Activated T-helper 2 cell treated with anti-CD3 and anti-CD28 coated beads, Interferon-gamma antibody, Interleukin-2, Interleukin-4, amounts not matched to agents 10 μg/mL and 5 μg/mL and 100 μg/mL, durations not matched to agents 14 hours and 24 hours and 36 hours (primary cell): ENCODE measurements at regions of chr5 and their contacts with region 1.

Region 1: GRCh38 chr5:54646356-54647101 is 129.0 kb downstream of the SNX18 start:
- DNase-seq: peak; percentile 74
- H3K4me3 Mint-ChIP-seq: peak overlapping the region; percentile 46
- H3K27ac Mint-ChIP-seq: peak overlapping the region; percentile 86
- H3K4me1 Mint-ChIP-seq: peaks cover 50% of the 10 kb centered on the region
- H3K27me3 Mint-ChIP-seq: no peaks in the 10 kb centered on the region

Region 2: GRCh38 chr5:54610197-54610944 is 36.2 kb before region 1 on chr5:
- intact Hi-C with region 1: loop called (anchors 2 kb)
- DNase-seq: peak; percentile 46
- H3K4me3 Mint-ChIP-seq: peak overlapping the region; percentile 38
- H3K27ac Mint-ChIP-seq: peak overlapping the region; percentile 58
- H3K4me1 Mint-ChIP-seq: peaks cover 29% of the 10 kb centered on the region
- H3K27me3 Mint-ChIP-seq: no peaks in the 10 kb centered on the region

Region 3: GRCh38 chr5:54743997-54744788 is 97.7 kb after region 1 on chr5:
- intact Hi-C with region 1: loop called (anchors 5 kb)
- DNase-seq: peak; percentile 58
- H3K4me3 Mint-ChIP-seq: no peak overlapping the region
- H3K27ac Mint-ChIP-seq: peak overlapping the region; percentile 59
- H3K4me1 Mint-ChIP-seq: peaks cover 26% of the 10 kb centered on the region
- H3K27me3 Mint-ChIP-seq: peaks cover 3% of the 10 kb centered on the region

Region 4: DNA sequence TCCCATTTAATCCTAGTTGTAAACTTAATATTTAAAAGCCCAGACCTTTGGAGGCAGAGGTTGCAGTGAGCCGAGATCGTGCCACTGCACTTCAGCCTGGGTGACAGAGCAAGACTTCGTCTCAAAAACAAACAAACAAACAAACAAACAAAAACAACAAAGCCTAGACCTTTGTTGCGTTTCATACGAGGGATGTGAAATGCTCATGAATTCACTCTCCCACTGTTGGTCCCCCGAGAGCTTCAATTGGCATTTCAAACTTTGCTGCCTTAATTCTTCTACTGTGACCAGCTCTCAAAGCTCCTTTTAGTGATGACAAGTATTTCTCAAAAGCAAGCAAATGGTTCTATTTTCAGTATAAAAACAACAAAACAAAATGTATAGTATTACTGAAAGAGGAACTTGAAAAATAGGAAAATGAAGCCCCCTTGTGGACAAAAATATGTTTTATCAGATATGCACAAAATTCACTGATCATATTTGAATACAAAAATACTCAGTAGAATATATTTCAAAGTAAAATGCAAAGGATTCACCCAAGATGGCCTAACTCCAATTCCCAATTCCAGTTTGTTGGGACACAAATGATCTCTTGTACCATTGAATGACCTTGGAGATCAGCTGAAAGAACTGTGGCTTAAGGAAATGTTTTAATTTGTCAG is 198.5 kb after region 1 on chr5:
- intact Hi-C with region 1: loop called (anchors 10 kb)
- DNase-seq: no peak
- H3K4me3 Mint-ChIP-seq: no peak overlapping the region
- H3K27ac Mint-ChIP-seq: no peak overlapping the region
- H3K4me1 Mint-ChIP-seq: peaks cover 15% of the 10 kb centered on the region
- H3K27me3 Mint-ChIP-seq: peaks cover 9% of the 10 kb centered on the region